AG04450 (cell line): ENCODE measurements at regions of chr2 and their contacts with region 1.

Region 1: DNA sequence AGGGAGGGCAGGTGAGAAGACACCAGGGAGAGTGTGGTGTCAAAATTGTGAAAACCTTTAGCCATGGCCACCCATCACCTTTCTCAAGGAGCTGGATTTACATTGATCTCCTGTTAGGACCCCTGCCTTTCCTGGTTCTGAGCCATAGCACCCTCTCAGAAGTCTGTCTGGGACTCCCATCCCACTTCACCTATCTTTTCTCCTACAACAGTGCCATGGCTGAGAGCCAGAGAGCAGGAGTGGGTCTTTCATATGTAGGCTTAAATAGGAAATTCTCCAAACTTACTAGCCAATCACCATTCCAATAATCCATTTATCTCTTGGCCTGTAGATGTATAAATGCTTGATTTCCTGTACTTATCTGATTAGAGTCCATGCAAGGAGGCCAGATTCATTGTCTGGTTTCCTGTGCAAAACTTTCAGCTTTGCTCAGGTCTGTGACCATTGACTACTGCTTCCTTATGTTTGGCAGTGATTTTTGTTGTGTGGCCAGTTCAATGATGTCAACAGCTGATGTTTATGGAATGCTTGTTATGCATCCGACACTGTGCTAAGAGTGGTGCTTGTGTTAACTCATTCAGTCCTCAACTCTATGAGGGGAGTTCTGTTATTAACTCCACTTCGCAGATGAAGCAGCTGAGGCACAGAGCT is 57.6 kb upstream of the IGFBP5 start:
- DNase-seq: no peak
- H3K4me3 ChIP-seq: no peak overlapping the region
- H3K27ac ChIP-seq: no peak overlapping the region
- H3K27me3 ChIP-seq: peaks cover 14% of the 10 kb centered on the region
- CTCF ChIP-seq: no peak

Region 2: DNA sequence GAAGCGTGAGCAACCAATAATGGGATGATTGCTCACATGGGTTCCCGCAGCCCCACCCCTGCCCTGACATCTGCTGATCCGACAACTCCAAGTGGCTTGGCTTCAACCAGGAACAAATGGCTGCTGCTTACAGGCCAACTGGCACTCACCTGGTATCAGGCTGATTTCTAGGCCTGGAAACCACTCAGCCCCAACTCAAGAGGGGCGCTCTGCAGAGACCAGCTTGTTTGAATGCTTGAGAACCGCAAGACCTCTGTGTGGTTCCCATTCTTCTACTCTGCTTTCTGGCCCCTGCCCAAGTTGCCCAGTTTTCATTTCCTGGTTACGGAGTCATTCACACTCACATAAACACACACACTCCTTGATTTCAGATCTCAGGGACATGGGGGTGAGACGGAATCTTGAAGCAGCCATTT is 54.9 kb after region 1 on chr2:
- CTCF ChIA-PET with region 1: interaction called, 12 read pairs
- POLR2A ChIA-PET with region 1: no interaction called
- DNase-seq: no peak
- H3K4me3 ChIP-seq: no peak overlapping the region
- H3K27ac ChIP-seq: no peak overlapping the region
- H3K27me3 ChIP-seq: no peaks in the 10 kb centered on the region
- CTCF ChIP-seq: no peak